ENCODE measurements at regions of chr1 and their contacts with region 1.

Region 1: DNA sequence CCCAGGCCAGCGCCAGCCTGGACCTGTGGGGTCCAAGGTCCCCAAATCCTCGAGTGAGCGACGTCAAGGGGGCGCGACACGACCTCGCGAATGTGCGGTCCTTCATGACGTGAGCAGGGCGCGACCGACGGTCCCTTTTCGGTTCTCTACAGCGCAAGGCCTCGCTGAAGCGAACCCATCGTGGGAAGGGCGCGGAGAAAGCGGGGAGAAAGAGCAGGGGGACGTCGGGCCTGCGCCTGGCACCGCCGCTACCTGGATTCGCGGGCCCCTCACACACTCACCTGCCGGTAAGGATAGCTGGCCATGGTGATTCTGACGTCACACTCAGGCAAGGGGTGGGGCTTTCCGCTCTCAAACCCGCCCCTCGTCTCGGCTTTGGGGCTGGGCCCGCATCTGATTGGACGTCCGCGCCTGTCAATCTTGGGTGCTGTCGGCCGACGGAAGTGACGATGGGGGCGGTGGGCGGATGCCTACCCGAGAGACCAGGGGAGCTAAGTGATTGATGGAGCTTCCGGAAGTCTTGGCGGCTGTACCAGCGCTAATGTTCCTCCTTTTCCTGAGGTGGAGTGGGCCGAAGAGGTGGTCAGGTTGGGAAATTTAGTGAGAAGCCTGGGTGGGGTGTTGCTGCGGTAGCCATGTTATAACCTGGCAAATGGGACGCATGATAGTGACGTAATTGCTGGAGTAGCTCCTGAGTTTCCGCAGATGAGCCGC is at the start of gene PEF1:
- DNase-seq: peak; percentile 93 to 99
- H3K4me3 ChIP-seq: peak within 1 kb of the TSS; percentile 78 to 85
- H3K27ac ChIP-seq: peak within 1 kb of the TSS; percentile 95 to 97
- H3K4me1 ChIP-seq: peaks cover 10 to 53% of the 10 kb centered on the region in 2 donors
- H3K27me3 ChIP-seq: no peaks in the 10 kb centered on the region
- CTCF ChIP-seq: no peak
- total RNA-seq, gene PEF1: 340 TPM

Region 2: GRCh38 chr1:30966690-30967369 is 677.9 kb before region 1 on chr1:
- intact Hi-C with region 1: no loop called
- DNase-seq: no peak
- H3K4me3 ChIP-seq: no peak overlapping the region
- H3K27ac ChIP-seq: peak overlapping the region in 1 of 2 donors; percentile 45
- H3K4me1 ChIP-seq: peaks cover 12 to 23% of the 10 kb centered on the region in 2 donors
- H3K27me3 ChIP-seq: no peaks in the 10 kb centered on the region
- CTCF ChIP-seq: no peak

Region 3: GRCh38 chr1:31576201-31576669 is 68.5 kb before region 1 on chr1 and contains the start of gene TINAGL1:
- intact Hi-C with region 1: loop called (anchors 2 kb)
- DNase-seq: peak in 1 of 2 donors; percentile 86
- H3K4me3 ChIP-seq: peak within 1 kb of the TSS; percentile 55 to 89
- H3K27ac ChIP-seq: peak within 1 kb of the TSS; percentile 93 to 97
- H3K4me1 ChIP-seq: peaks cover 18 to 41% of the 10 kb centered on the region in 2 donors
- H3K27me3 ChIP-seq: no peaks in the 10 kb centered on the region
- CTCF ChIP-seq: no peak
- total RNA-seq, gene TINAGL1: 1,807 TPM

Region 4: DNA sequence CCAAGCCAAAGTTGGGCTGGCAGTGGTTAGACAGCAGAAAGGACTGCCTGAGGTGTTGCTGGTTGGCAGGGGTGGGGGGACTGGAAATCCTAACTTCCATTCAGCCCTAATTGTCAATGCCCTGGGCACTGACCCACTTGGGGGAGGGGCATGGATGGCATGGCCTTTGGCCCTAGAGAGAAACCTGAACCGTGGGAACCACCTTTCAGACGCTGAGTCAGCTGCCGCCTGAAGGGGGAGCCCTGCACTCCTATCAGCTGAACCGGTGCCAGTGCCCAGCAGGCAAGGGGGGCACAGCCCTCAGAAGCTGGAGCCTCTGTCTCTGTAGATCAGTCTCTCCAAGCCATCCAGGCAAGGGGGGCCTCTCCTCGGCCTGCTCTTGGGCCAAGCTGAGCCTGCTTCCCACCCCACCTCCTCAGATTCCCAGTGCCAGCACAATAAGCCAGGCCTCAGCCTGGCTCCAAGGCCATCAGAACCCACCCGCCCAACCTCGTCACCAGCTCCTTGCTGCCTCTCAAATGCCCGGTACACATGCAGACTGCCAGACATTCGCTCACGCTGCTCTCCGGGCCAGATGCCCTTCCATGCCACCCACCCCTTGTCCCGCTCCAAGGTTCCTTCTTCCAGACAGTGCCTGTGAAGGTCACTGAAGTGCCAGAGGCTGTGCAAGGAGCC is 56.9 kb before region 1 on chr1:
- intact Hi-C with region 1: loop called (anchors 2 kb)
- DNase-seq: peak; percentile 70 to 94
- H3K4me3 ChIP-seq: peak overlapping the region; percentile 46 to 56
- H3K27ac ChIP-seq: peak overlapping the region; percentile 93 to 97
- H3K4me1 ChIP-seq: peaks cover 45 to 77% of the 10 kb centered on the region in 2 donors
- H3K27me3 ChIP-seq: no peaks in the 10 kb centered on the region
- CTCF ChIP-seq: peak; percentile 28 to 69 (median 65)

Region 5: DNA sequence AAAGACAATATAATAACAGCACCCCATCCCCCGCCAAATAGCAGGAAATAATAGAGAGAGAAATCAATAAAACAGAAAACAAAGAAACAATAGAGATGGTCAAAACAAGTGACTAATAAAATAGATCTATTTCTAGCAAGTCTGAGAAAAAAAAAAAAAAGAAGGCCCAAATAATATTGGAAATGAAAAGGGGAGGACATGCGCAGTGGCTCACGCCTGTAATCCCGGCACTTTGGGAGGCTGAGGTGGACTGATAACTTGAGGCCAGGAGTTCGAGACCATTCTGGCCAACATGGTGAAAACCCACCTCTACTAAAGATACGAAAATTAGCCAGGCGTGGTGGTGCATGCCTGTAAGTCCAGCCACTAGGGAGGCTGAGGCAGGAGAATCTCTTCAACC is 45.7 kb before region 1 on chr1:
- intact Hi-C with region 1: no loop called
- DNase-seq: no peak
- H3K4me3 ChIP-seq: no peak overlapping the region
- H3K27ac ChIP-seq: no peak overlapping the region
- H3K4me1 ChIP-seq: no peaks in the 10 kb centered on the region
- H3K27me3 ChIP-seq: no peaks in the 10 kb centered on the region
- CTCF ChIP-seq: no peak

Region 6: GRCh38 chr1:31626223-31627207 is 18.2 kb before region 1 on chr1:
- intact Hi-C with region 1: loop called (anchors 1 kb)
- DNase-seq: no peak
- H3K4me3 ChIP-seq: no peak overlapping the region
- H3K27ac ChIP-seq: peak overlapping the region; percentile 90 to 91
- H3K4me1 ChIP-seq: peaks cover 25 to 48% of the 10 kb centered on the region in 2 donors
- H3K27me3 ChIP-seq: no peaks in the 10 kb centered on the region
- CTCF ChIP-seq: no peak

Region 7: DNA sequence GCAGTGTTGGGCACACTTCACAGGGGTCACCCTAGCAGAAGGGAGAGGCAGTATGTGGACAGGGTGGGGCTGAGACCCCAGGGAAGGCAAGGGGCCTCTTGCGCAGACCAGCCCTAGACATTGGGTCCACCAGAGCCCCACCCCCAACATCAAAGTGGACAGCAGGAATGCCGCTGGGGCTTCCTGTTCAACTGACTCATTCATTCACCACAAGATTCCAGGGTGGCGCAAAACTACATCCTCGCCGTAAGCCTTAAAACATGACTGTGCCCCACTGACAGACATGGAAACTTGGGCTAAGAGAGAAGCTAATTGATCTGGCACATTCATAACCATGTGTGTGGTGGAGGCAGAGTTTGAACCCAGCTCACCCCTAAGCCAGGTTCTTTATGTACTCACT is 45.1 kb after region 1 on chr1:
- intact Hi-C with region 1: no loop called
- DNase-seq: no peak
- H3K4me3 ChIP-seq: no peak overlapping the region
- H3K27ac ChIP-seq: no peak overlapping the region
- H3K4me1 ChIP-seq: no peaks in the 10 kb centered on the region
- H3K27me3 ChIP-seq: no peaks in the 10 kb centered on the region
- CTCF ChIP-seq: no peak

Region 8: DNA sequence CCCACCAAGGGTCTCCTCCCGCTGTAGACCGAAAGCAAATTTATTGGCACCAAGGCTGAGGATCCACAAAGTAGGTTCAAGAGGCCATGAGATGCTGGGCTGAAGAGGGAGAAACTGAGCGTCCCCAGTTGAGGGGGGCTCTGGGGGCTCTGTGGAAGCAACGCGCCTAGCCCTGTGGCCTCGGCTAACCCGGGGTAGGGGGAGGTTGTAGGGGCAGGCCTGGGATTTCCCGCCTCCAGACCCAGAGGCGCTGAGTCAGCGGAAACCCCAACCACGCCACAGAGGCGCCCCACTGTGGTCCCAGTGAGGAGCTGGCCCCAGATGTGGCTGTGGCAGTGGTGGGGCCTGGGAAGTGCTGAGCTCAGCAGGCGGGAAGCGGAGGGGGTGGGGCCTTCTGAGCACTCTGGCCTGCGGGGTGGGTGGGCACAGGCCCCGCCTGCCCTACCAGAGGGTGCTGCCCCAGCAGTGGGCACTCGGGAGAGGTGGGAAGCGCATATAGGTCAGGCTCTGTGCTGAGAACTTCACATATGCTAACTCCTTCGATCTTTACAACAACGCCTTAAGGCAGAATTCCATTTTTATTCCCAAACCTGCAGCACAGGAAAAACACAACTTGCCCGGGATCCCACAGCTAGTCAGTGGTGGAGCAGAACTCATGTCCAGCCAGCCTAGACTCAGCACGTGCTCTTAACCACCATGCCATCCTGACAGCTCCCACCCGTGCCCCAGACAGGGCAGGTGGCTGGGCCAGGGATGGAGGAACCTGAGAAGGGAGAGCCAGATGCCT is 60.6 kb after region 1 on chr1:
- intact Hi-C with region 1: loop called (anchors 2 kb)
- DNase-seq: peak in 1 of 2 donors; percentile 84
- H3K4me3 ChIP-seq: peak overlapping the region; percentile 47 to 65
- H3K27ac ChIP-seq: peak overlapping the region; percentile 90 to 94
- H3K4me1 ChIP-seq: peaks cover 8 to 52% of the 10 kb centered on the region in 2 donors
- H3K27me3 ChIP-seq: no peaks in the 10 kb centered on the region
- CTCF ChIP-seq: peak; percentile 35 to 63 (median 46)

Region 9: DNA sequence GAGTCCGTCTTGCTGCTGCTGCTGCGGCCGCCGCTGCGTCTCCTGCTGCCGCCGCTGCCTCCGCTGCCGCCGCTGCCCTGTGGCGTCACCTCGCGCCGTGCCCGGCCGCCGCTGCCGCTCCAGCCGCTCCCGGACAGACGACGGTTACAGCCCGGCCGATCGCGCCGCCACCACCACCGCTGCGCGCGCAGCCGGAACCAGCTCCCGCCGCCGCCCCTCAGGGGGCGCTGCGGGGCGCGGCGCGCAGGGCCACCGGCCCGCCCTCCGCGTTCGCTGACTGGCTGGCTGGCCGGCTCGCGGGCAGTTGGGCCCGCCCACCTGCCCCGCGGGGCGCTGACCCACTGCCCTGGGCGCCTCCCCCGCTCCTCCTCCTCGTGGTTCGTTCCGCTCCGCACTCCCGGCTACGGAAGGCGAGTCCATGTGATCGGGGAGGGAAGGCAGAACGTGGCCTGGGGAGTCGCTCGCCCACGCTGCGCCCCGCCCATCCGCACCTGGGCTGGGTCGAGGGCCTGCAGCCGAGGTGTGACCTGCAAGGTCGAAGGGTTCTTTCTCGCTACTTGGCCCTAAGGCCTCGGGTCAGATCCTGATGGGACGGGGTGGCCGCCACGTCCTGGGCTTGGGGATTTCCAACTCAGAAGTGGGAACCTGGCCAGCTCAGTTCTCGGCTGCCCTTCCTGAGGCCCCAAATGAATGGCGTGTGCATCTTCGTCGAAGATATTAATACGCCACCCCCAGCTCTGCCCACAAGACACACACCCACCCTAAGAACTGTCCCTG is 293.6 kb after region 1 on chr1 and contains the start of gene PTP4A2:
- intact Hi-C with region 1: loop called (anchors 5 kb)
- DNase-seq: peak; percentile 77 to 95
- H3K4me3 ChIP-seq: peak within 1 kb of the TSS; percentile 70 to 85
- H3K27ac ChIP-seq: peak within 1 kb of the TSS; percentile 94 to 97
- H3K4me1 ChIP-seq: peaks cover 12 to 26% of the 10 kb centered on the region in 2 donors
- H3K27me3 ChIP-seq: no peaks in the 10 kb centered on the region
- CTCF ChIP-seq: peak in 1 of 3 experiments; percentile 98
- total RNA-seq, gene PTP4A2: 174 TPM